ENCODE measurements at regions of chr7 and their contacts with region 1.

Region 1: GRCh38 chr7:2757904-2758672 is 70.1 kb downstream of the AMZ1 start:
- DNase-seq: peak; percentile 95 to 98 (median 96)
- H3K4me3 ChIP-seq: peak overlapping the region in 1 of 3 experiments; percentile 23
- H3K4me3 Mint-ChIP-seq: peak overlapping the region; percentile 55 to 82
- H3K27ac ChIP-seq: peak overlapping the region; percentile 99 to 100
- H3K27ac Mint-ChIP-seq: peak overlapping the region; percentile 97 to 99 (median 99)
- H3K4me1 ChIP-seq: peaks cover 49 to 53% of the 10 kb centered on the region in 2 donors
- H3K4me1 Mint-ChIP-seq: peaks cover 63% of the 10 kb centered on the region
- H3K27me3 ChIP-seq: no peaks in the 10 kb centered on the region
- H3K27me3 Mint-ChIP-seq: no peaks in the 10 kb centered on the region
- CTCF ChIP-seq: no peak

Region 2: DNA sequence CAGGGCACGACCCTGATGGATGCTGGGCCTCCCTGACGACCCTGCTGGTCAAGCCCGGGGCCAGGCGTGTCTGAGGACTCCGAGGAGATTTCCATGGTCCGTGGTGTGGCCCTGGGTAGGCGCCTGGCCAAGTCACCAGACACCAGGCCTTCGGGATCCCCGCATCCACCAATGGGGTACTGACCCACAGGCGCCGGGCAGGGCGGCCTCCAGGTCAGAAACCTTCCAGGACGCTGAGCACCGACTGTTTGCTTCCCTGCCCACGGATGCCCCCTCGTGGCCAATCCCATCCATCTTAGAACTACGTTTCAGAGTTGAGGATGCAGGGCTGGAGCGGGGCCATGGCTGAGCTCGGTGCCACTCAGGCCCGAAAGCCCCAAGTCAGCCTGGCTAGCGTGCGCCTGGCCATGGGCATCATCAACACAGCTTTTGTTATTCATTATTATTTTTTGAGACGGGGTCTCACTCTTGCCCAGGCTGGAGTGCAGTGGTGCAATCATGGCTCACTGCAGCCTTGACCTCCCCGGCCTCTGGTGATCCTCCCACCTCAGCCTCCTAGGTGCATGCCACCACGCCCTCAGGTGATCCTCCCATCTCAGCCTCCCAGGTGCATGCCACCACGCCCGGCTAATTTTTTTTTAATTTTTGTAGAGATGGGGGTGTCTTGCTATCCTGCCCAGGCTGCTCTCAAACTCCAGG is 77.1 kb before region 1 on chr7:
- intact Hi-C with region 1: loop called in 1 of 2 experiments (anchors 2 kb)
- DNase-seq: peak; percentile 69 to 77 (median 73)
- H3K4me3 ChIP-seq: no peak overlapping the region
- H3K4me3 Mint-ChIP-seq: no peak overlapping the region
- H3K27ac ChIP-seq: no peak overlapping the region
- H3K27ac Mint-ChIP-seq: no peak overlapping the region
- H3K4me1 ChIP-seq: peaks cover 3 to 4% of the 10 kb centered on the region in 2 donors
- H3K4me1 Mint-ChIP-seq: peaks cover 2% of the 10 kb centered on the region
- H3K27me3 ChIP-seq: peaks cover 0 to 7% of the 10 kb centered on the region in 2 donors
- H3K27me3 Mint-ChIP-seq: peaks cover 12 to 41% (median 14%) of the 10 kb centered on the region in 3 donors
- CTCF ChIP-seq: peak; percentile 81

Region 3: GRCh38 chr7:2720582-2721491 is 37.3 kb before region 1 on chr7:
- intact Hi-C with region 1: loop called in 1 of 2 experiments (anchors 5 kb)
- DNase-seq: peak; percentile 82 to 91 (median 83)
- H3K4me3 ChIP-seq: no peak overlapping the region
- H3K4me3 Mint-ChIP-seq: peak overlapping the region in 1 of 2 donors; percentile 36
- H3K27ac ChIP-seq: no peak overlapping the region
- H3K27ac Mint-ChIP-seq: peak overlapping the region in 4 of 7 donors; percentile 47 to 79 (median 73)
- H3K4me1 ChIP-seq: peaks cover 30 to 39% of the 10 kb centered on the region in 2 donors
- H3K4me1 Mint-ChIP-seq: peaks cover 35% of the 10 kb centered on the region
- H3K27me3 ChIP-seq: peaks cover 0 to 22% of the 10 kb centered on the region in 2 donors
- H3K27me3 Mint-ChIP-seq: peaks cover 35 to 41% (median 36%) of the 10 kb centered on the region in 3 donors
- CTCF ChIP-seq: peak; percentile 52

Region 4: DNA sequence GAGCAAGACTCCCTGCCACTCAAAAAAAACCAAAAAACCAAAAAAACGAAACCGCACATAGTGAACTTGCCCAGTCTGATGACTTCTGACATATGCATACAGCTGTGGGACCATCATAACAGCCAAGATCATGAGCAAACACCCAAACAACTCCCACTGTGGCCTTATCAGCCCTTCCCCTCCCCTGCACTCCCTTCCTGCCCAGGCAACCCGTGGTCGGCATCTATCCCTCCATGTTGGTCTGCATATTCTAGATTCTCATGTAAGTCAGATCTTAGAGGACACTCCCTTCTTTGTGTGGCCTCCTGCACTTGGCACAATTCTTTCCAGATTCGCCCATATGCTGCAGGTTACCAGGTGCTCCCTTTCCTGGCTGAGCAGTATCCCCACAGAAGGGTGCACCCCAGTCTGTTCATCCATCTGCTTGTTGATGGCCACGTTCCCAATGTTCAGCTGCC is 13.2 kb after region 1 on chr7:
- intact Hi-C with region 1: loop called in 1 of 2 experiments (anchors 1 kb)
- DNase-seq: no peak
- H3K4me3 ChIP-seq: no peak overlapping the region
- H3K4me3 Mint-ChIP-seq: no peak overlapping the region
- H3K27ac ChIP-seq: peak overlapping the region; percentile 91 to 93
- H3K27ac Mint-ChIP-seq: peak overlapping the region; percentile 98 to 100 (median 99)
- H3K4me1 ChIP-seq: peaks cover 47 to 49% of the 10 kb centered on the region in 2 donors
- H3K4me1 Mint-ChIP-seq: peaks cover 59% of the 10 kb centered on the region
- H3K27me3 ChIP-seq: no peaks in the 10 kb centered on the region
- H3K27me3 Mint-ChIP-seq: no peaks in the 10 kb centered on the region
- CTCF ChIP-seq: no peak

Region 5: GRCh38 chr7:2792856-2793487 is 34.9 kb after region 1 on chr7:
- intact Hi-C with region 1: loop called in 1 of 2 experiments (anchors 1 kb)
- DNase-seq: peak; percentile 86 to 96 (median 92)
- H3K4me3 ChIP-seq: peak overlapping the region in 2 of 3 experiments; percentile 11 to 36
- H3K4me3 Mint-ChIP-seq: peak overlapping the region; percentile 66 to 71
- H3K27ac ChIP-seq: peak overlapping the region; percentile 78 to 86
- H3K27ac Mint-ChIP-seq: peak overlapping the region; percentile 79 to 94 (median 89)
- H3K4me1 ChIP-seq: peaks cover 19 to 26% of the 10 kb centered on the region in 2 donors
- H3K4me1 Mint-ChIP-seq: peaks cover 37% of the 10 kb centered on the region
- H3K27me3 ChIP-seq: no peaks in the 10 kb centered on the region
- H3K27me3 Mint-ChIP-seq: peaks cover 0 to 4% (median 3%) of the 10 kb centered on the region in 3 donors
- CTCF ChIP-seq: no peak

Region 6: GRCh38 chr7:3194501-3195141 is 436.5 kb after region 1 on chr7:
- intact Hi-C with region 1: no loop called
- DNase-seq: no peak
- H3K4me3 ChIP-seq: no peak overlapping the region
- H3K4me3 Mint-ChIP-seq: no peak overlapping the region
- H3K27ac ChIP-seq: no peak overlapping the region
- H3K27ac Mint-ChIP-seq: no peak overlapping the region
- H3K4me1 ChIP-seq: no peaks in the 10 kb centered on the region
- H3K4me1 Mint-ChIP-seq: peaks cover 3% of the 10 kb centered on the region
- H3K27me3 ChIP-seq: no peaks in the 10 kb centered on the region
- H3K27me3 Mint-ChIP-seq: peaks cover 3 to 9% (median 3%) of the 10 kb centered on the region in 3 donors
- CTCF ChIP-seq: no peak